CD4-positive, alpha-beta T cell (primary cell): ENCODE measurements at regions of chr14 and their contacts with region 1.

Region 1: DNA sequence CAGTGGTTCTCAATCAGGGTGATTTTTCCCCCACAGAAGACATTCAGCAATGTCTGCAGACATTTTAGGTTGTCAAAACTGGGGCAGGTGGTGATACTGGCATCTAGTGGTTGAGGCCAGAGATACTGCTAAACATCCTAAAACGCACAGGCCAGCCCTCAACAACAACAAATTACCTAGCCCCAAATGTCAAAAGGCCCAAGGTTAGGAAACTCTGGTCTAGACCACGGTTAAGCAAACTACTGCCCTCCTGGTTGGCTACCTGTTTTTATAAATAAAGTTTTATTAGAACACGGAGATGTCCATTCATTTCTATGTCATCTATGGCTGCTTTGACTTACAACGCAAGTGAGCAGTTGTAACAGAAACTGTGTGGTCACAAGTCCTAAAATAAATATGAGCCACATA is 186.7 kb downstream of the EFCAB11 start:
- DNase-seq: peak; percentile 46 to 86 (median 57)
- ATAC-seq: peak; percentile 96
- H3K4me3 ChIP-seq: no peak overlapping the region
- H3K4me3 Mint-ChIP-seq: peak overlapping the region; percentile 52
- H3K27ac ChIP-seq: no peak overlapping the region
- H3K27ac Mint-ChIP-seq: peak overlapping the region; percentile 52
- H3K4me1 ChIP-seq: peaks cover 21% of the 10 kb centered on the region
- H3K4me1 Mint-ChIP-seq: peaks cover 43% of the 10 kb centered on the region
- H3K27me3 ChIP-seq: no peaks in the 10 kb centered on the region
- H3K27me3 Mint-ChIP-seq: no peaks in the 10 kb centered on the region
- CTCF ChIP-seq: peak; percentile 82

Region 2: DNA sequence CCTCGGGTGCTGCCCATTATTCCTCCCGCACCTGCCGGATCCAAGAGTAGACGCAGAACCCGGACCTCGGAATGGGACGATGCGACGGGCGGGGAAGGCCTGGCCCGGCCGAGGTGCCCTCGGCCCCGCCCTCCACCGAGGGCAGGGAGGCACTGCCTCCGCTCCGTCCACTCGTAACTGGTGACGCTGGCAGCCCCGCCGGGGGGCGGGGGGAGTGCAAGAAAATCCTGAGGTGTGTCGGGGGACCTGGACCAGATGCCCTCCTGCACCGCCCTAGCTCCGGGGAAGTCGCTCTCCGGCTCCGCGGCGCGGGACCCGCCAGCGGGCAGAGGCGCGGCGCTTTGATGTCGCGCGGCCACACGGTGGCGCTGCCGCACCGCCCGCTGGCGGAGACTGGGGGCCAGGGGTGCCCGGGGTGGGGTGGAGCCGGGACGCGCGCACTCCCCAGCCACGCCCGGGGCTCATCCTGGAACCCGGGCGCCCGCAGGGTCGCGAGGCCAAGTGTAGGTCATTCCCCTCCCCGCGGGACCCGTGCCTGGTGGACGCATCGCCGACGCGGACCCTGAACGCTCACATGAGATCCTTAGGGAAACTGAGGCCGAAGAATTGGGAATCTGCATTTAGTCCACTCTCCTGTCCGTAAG is 740.6 kb before region 1 on chr14:
- CTCF ChIA-PET with region 1: no interaction called
- POLR2A ChIA-PET with region 1: no interaction called
- intact Hi-C with region 1: loop called in 1 of 2 experiments (anchors 5 kb)
- DNase-seq: peak; percentile 20 to 81 (median 50)
- ATAC-seq: peak; percentile 88
- H3K4me3 ChIP-seq: peak overlapping the region; percentile 51
- H3K4me3 Mint-ChIP-seq: peak overlapping the region; percentile 55
- H3K27ac ChIP-seq: no peak overlapping the region
- H3K27ac Mint-ChIP-seq: no peak overlapping the region
- H3K4me1 ChIP-seq: peaks cover 21% of the 10 kb centered on the region
- H3K4me1 Mint-ChIP-seq: peaks cover 10% of the 10 kb centered on the region
- H3K27me3 ChIP-seq: peaks cover 43 to 56% of the 10 kb centered on the region in 2 experiments
- H3K27me3 Mint-ChIP-seq: peaks cover 80% of the 10 kb centered on the region
- CTCF ChIP-seq: peak; percentile 64

Region 3: DNA sequence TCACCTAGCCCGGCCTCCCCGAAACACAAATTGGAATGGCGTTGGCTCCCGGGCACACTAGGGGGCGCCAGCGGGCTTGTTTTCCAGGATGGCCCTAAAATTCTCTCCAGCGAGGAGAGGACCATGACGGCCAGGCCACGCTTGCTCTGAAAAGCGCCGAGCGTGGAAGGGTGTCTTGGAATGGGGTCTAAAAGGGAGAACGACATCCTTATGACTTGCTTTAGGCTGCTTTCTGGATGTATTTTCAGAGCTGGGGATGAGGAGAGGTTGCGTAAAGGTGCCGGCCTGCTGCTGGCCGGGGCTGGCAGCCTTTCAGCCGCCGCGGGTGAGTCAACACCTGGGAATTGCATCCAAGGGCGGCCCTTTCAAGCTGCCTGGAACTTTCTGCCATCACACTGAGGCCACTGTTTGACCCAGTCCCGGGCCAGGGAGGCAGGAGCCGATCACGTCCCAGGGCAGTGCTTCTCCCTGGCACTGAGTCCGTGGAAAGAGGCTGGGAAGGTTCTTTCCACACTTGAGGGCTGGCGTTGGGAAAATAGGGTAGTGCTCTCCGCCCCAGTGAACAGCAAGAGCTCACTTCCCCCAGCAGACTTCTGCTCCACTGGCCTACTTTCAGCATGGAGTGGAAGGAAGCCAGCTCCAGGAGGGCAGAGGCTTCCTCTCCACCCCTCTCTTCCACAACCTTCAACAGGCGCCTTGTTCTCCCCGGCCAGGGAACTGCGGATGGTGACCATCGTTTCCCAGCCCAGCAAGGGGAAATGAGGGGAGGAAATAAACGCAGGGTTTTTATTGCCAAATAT is 727.2 kb before region 1 on chr14:
- CTCF ChIA-PET with region 1: no interaction called
- POLR2A ChIA-PET with region 1: no interaction called
- intact Hi-C with region 1: loop called (anchors 2 kb)
- DNase-seq: peak; percentile 57 to 87 (median 76)
- ATAC-seq: peak; percentile 67
- H3K4me3 ChIP-seq: peak overlapping the region; percentile 49
- H3K4me3 Mint-ChIP-seq: peak overlapping the region; percentile 60
- H3K27ac ChIP-seq: no peak overlapping the region
- H3K27ac Mint-ChIP-seq: no peak overlapping the region
- H3K4me1 ChIP-seq: peaks cover 14% of the 10 kb centered on the region
- H3K4me1 Mint-ChIP-seq: peaks cover 15% of the 10 kb centered on the region
- H3K27me3 ChIP-seq: peaks cover 0 to 3% of the 10 kb centered on the region in 2 experiments
- H3K27me3 Mint-ChIP-seq: peaks cover 45% of the 10 kb centered on the region
- CTCF ChIP-seq: peak; percentile 98

Region 4: GRCh38 chr14:89178802-89179535 is 588.9 kb before region 1 on chr14:
- CTCF ChIA-PET with region 1: no interaction called
- POLR2A ChIA-PET with region 1: interaction called, 3 read pairs
- intact Hi-C with region 1: loop called (anchors 1 to 2 kb)
- DNase-seq: no peak
- ATAC-seq: no peak
- H3K4me3 ChIP-seq: no peak overlapping the region
- H3K4me3 Mint-ChIP-seq: no peak overlapping the region
- H3K27ac ChIP-seq: no peak overlapping the region
- H3K27ac Mint-ChIP-seq: peak overlapping the region; percentile 40
- H3K4me1 ChIP-seq: peaks cover 7% of the 10 kb centered on the region
- H3K4me1 Mint-ChIP-seq: peaks cover 35% of the 10 kb centered on the region
- H3K27me3 ChIP-seq: no peaks in the 10 kb centered on the region
- H3K27me3 Mint-ChIP-seq: no peaks in the 10 kb centered on the region
- CTCF ChIP-seq: no peak

Region 5: GRCh38 chr14:89422181-89422951 is 345.5 kb before region 1 on chr14:
- CTCF ChIA-PET with region 1: no interaction called
- POLR2A ChIA-PET with region 1: no interaction called
- intact Hi-C with region 1: loop called (anchors 5 kb)
- DNase-seq: peak in 1 of 14 experiments; percentile 21
- ATAC-seq: no peak
- H3K4me3 ChIP-seq: no peak overlapping the region
- H3K4me3 Mint-ChIP-seq: no peak overlapping the region
- H3K27ac ChIP-seq: no peak overlapping the region
- H3K27ac Mint-ChIP-seq: peak overlapping the region; percentile 61
- H3K4me1 ChIP-seq: peaks cover 20% of the 10 kb centered on the region
- H3K4me1 Mint-ChIP-seq: peaks cover 73% of the 10 kb centered on the region
- H3K27me3 ChIP-seq: no peaks in the 10 kb centered on the region
- H3K27me3 Mint-ChIP-seq: no peaks in the 10 kb centered on the region
- CTCF ChIP-seq: no peak

Region 6: DNA sequence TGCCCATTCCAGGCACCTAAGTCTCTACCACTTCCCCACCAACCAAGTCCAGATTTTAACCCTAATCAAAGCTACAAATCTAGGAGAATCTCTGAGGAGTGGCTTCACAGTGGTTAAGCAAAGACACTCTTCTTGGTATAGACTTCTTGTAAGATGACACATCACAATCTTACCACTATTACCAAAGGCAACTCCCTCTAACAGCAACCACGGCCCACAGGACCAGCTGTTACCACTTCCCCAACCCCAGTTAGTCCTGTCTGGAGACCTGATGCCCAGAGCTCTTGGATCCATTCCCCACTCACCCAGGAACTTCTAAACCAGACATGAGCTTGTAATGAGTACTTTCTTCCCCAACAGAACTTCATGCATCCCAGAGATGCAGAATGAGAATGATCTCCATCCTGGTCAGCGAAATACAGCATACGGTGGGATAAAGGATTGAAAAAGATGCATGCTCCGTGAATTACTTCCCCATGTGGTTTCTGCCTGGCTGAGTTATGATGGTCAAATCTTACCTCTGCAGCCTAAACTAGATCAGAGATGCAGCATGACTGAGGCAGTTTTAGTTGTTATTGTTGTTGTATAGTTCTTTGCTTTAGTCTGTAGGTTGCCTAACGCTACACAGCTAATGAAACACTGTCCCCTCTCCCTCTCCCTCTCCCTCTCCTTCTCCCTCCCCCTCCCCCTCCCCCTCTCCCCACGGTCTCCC is 263.1 kb before region 1 on chr14:
- CTCF ChIA-PET with region 1: no interaction called
- POLR2A ChIA-PET with region 1: no interaction called
- intact Hi-C with region 1: loop called in 1 of 2 experiments (anchors 10 kb)
- DNase-seq: peak in 4 of 14 experiments; percentile 10 to 57 (median 44)
- ATAC-seq: peak; percentile 26
- H3K4me3 ChIP-seq: no peak overlapping the region
- H3K4me3 Mint-ChIP-seq: no peak overlapping the region
- H3K27ac ChIP-seq: no peak overlapping the region
- H3K27ac Mint-ChIP-seq: peak overlapping the region; percentile 48
- H3K4me1 ChIP-seq: peaks cover 20% of the 10 kb centered on the region
- H3K4me1 Mint-ChIP-seq: peaks cover 56% of the 10 kb centered on the region
- H3K27me3 ChIP-seq: no peaks in the 10 kb centered on the region
- H3K27me3 Mint-ChIP-seq: no peaks in the 10 kb centered on the region
- CTCF ChIP-seq: no peak

Region 7: GRCh38 chr14:89792489-89793366 is 24.9 kb after region 1 on chr14:
- CTCF ChIA-PET with region 1: no interaction called
- POLR2A ChIA-PET with region 1: no interaction called
- intact Hi-C with region 1: no loop called
- DNase-seq: no peak
- ATAC-seq: no peak
- H3K4me3 ChIP-seq: no peak overlapping the region
- H3K4me3 Mint-ChIP-seq: no peak overlapping the region
- H3K27ac ChIP-seq: no peak overlapping the region
- H3K27ac Mint-ChIP-seq: no peak overlapping the region
- H3K4me1 ChIP-seq: no peaks in the 10 kb centered on the region
- H3K4me1 Mint-ChIP-seq: no peaks in the 10 kb centered on the region
- H3K27me3 ChIP-seq: no peaks in the 10 kb centered on the region
- H3K27me3 Mint-ChIP-seq: no peaks in the 10 kb centered on the region
- CTCF ChIP-seq: no peak

Region 8: DNA sequence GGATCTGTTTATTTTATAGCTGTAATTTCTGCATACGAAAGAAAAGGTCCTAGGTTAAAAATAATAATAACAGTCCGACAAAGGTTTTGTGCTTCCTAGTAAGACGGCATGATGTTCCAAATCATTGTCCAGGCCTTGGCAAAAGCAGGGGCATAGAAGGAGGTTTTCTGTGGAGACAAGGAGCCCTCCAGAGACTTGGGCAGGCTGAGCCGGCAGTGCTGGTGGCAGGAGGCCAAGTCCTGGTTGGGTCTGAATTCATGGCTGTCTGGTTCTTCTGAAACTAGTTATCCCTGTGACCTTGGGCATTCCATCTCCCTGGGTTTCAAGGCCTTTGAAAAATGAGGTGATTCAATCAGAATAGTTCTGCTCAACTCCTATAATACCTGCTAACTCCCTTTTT is 337.9 kb after region 1 on chr14:
- CTCF ChIA-PET with region 1: no interaction called
- POLR2A ChIA-PET with region 1: no interaction called
- intact Hi-C with region 1: no loop called
- DNase-seq: no peak
- ATAC-seq: no peak
- H3K4me3 ChIP-seq: no peak overlapping the region
- H3K4me3 Mint-ChIP-seq: no peak overlapping the region
- H3K27ac ChIP-seq: no peak overlapping the region
- H3K27ac Mint-ChIP-seq: no peak overlapping the region
- H3K4me1 ChIP-seq: no peaks in the 10 kb centered on the region
- H3K4me1 Mint-ChIP-seq: no peaks in the 10 kb centered on the region
- H3K27me3 ChIP-seq: peaks cover 0 to 3% of the 10 kb centered on the region in 2 experiments
- H3K27me3 Mint-ChIP-seq: peaks cover 15% of the 10 kb centered on the region
- CTCF ChIP-seq: no peak